ENCODE measurements at regions of chr16 and their contacts with region 1.

Region 1: GRCh38 chr16:52068447-52069074 is 478.4 kb downstream of the TOX3 start:
- ATAC-seq: peak; percentile 62 to 87 (median 76)
- H3K4me3 ChIP-seq: no peak overlapping the region
- H3K27ac ChIP-seq: no peak overlapping the region
- H3K4me1 ChIP-seq: peaks cover 7 to 12% of the 10 kb centered on the region in 2 donors

Region 2: GRCh38 chr16:51696376-51696775 is 372.2 kb before region 1 on chr16:
- in situ Hi-C with region 1: no loop called
- ATAC-seq: peak in 1 of 8 experiments; percentile 39
- H3K4me3 ChIP-seq: no peak overlapping the region
- H3K27ac ChIP-seq: no peak overlapping the region
- H3K4me1 ChIP-seq: peaks cover 2 to 4% of the 10 kb centered on the region in 2 donors

Region 3: DNA sequence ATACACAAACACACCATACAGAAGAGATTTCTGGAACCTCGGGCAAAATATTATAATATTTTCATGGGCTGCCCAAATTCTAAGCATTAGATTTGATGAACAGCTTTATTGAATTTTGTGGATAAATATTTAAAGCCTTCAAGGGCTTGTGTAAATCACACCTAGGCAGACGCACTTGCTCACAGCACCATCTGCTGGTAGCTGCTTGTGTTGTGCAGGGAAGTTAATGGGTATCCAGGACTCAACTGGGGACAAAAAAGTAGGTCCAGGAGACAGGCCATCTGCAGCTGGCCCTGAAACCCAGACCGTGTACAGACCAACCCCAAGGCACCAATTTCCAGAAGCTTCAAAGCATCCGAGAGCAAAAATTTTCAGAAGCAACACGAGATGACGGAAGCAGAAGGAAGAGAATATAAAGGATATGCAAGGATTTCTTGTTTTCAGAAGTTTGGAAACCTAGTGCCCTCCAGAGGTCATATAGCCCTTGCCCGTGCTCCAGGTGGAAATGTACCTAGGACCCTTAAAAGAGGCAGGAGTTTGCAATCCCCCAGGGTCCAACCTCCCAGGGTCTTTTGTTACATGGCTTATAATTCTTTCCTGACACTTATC is 844.1 kb after region 1 on chr16:
- in situ Hi-C with region 1: loop called in 1 of 9 experiments (anchors 25 kb)
- ATAC-seq: peak; percentile 72 to 91 (median 80)
- H3K4me3 ChIP-seq: no peak overlapping the region
- H3K27ac ChIP-seq: no peak overlapping the region
- H3K4me1 ChIP-seq: peaks cover 4% of the 10 kb centered on the region in 2 donors

Region 4: GRCh38 chr16:53022374-53022773 is 953.8 kb after region 1 on chr16:
- in situ Hi-C with region 1: loop called in 5 of 9 experiments (anchors 10 to 25 kb)
- ATAC-seq: peak; percentile 76 to 98 (median 88)
- H3K4me3 ChIP-seq: no peak overlapping the region
- H3K27ac ChIP-seq: no peak overlapping the region
- H3K4me1 ChIP-seq: no peaks in the 10 kb centered on the region

Region 5: GRCh38 chr16:53041320-53042051 is 972.9 kb after region 1 on chr16:
- in situ Hi-C with region 1: loop called in 1 of 9 experiments (anchors 25 kb)
- ATAC-seq: peak in 6 of 8 experiments; percentile 30 to 84 (median 60)
- H3K4me3 ChIP-seq: no peak overlapping the region
- H3K27ac ChIP-seq: no peak overlapping the region
- H3K4me1 ChIP-seq: peaks cover 3 to 17% of the 10 kb centered on the region in 2 donors